ENCODE measurements at regions of chr11 and their contacts with region 1.

Region 1: GRCh38 chr11:9534791-9535781 is 38.4 kb upstream of the WEE1 start:
- DNase-seq: peak; percentile 93
- H3K4me3 Mint-ChIP-seq: no peak overlapping the region
- H3K27ac Mint-ChIP-seq: no peak overlapping the region
- H3K4me1 Mint-ChIP-seq: no peaks in the 10 kb centered on the region
- H3K27me3 Mint-ChIP-seq: no peaks in the 10 kb centered on the region

Region 2: GRCh38 chr11:9972989-9973388 is 437.9 kb after region 1 on chr11:
- intact Hi-C with region 1: loop called (anchors 10 kb)
- DNase-seq: peak; percentile 80
- H3K4me3 Mint-ChIP-seq: no peak overlapping the region
- H3K27ac Mint-ChIP-seq: no peak overlapping the region
- H3K4me1 Mint-ChIP-seq: peaks cover 4% of the 10 kb centered on the region
- H3K27me3 Mint-ChIP-seq: no peaks in the 10 kb centered on the region

Measured in activated CD4-positive, alpha-beta T cell treated with anti-CD3 and anti-CD28 coated beads, Interleukin-2, amount 10 ng/mL, durations not matched to agents 24 days and 14 days (primary cell).